ENCODE measurements at regions of chr7 and their contacts with region 1.

Region 1: GRCh38 chr7:100190048-100190711 is 12.5 kb downstream of the STAG3 start:
- DNase-seq: no peak
- ATAC-seq: peak; percentile 81
- H3K4me3 Mint-ChIP-seq: no peak overlapping the region
- H3K27ac Mint-ChIP-seq: peak overlapping the region; percentile 75
- H3K4me1 Mint-ChIP-seq: peaks cover 31% of the 10 kb centered on the region
- H3K27me3 Mint-ChIP-seq: no peaks in the 10 kb centered on the region

Region 2: GRCh38 chr7:99478464-99479440 is 711.4 kb before region 1 on chr7:
- CTCF ChIA-PET with region 1: no interaction called
- POLR2A ChIA-PET with region 1: no interaction called
- DNase-seq: no peak
- ATAC-seq: peak; percentile 28
- H3K4me3 Mint-ChIP-seq: no peak overlapping the region
- H3K27ac Mint-ChIP-seq: peak overlapping the region; percentile 76
- H3K4me1 Mint-ChIP-seq: peaks cover 42% of the 10 kb centered on the region
- H3K27me3 Mint-ChIP-seq: no peaks in the 10 kb centered on the region

Region 3: DNA sequence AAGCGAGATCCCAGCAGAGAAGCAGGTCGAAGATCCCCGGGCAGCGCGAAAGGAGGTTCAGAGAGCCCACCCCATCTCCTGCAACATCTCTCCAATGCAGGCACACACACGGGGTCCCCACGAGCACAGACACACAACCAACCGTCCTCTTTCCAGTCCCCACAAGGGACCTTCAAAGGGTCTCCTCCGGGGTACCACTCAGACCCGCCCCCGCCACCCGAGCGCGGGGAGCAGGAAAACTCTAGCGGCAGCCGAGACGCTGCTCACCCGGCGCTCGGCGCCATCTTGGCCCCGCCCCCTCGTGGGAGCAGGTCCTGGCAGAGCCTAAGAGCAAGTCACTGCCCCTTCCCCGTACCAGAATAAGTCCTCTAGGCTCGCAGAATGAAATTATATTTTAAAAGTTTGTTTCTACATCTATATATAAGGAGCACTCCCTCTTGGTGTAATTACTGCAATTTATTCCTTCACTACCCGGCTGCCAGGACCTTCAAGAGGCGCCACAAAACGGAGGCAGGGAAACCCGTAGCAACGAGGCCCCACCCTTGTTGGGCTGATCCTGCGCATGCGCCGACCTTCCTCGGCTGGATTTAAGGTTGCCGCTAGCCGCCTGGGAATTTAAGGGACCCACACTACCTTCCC is 71.0 kb before region 1 on chr7 and contains the starts of genes CNPY4 and TAF6:
- CTCF ChIA-PET with region 1: no interaction called
- POLR2A ChIA-PET with region 1: no interaction called
- DNase-seq: peak; percentile 96
- ATAC-seq: peak; percentile 77
- H3K4me3 Mint-ChIP-seq: peak within 1 kb of the TSS; percentile 93
- H3K27ac Mint-ChIP-seq: peak within 1 kb of the TSS; percentile 95
- H3K4me1 Mint-ChIP-seq: peaks cover 21% of the 10 kb centered on the region
- H3K27me3 Mint-ChIP-seq: no peaks in the 10 kb centered on the region
- total RNA-seq, gene CNPY4: 32.4 to 35.5 TPM
- total RNA-seq, gene TAF6: 74.6 to 81.0 TPM

Region 4: DNA sequence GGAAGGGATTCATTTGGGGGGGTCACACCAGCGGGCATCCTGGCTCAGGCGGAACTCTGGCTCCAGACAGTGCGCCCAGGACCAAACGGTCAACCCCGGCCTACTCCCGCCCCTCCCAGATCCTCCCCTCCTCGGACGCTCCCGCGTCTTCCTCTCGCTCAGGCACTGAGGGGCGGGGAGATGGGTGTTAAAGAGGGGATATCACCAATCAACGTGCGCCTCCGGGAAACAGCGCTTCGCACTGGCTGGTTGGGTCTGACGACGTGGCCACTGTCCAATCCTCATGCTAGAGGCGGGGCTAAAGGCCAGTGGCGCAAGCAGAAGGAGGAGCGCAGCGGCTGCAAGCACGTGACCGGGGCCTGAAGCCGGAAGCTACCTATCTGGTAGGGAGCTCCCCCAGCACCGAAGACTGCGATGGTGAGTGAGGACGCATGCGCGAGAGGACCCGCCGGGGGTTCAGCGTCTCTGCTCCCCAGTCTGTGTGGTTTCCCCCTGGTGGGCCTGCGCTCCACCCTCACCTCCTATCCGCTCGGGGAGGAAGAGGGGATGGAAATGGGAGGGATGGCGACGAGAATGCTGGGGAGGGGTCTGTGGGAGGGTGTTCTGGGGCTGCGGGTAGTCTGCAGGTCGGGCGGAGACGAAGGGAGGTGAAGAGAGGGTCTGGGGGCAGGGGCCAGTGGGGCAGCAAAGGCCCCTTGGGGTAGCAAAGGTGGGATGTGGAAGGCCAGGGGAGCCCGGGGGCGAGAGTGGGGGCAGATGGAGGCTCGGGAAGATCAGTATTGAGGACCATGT is 41.4 kb before region 1 on chr7 and contains the start of gene LAMTOR4:
- CTCF ChIA-PET with region 1: interaction called, 10 read pairs
- POLR2A ChIA-PET with region 1: no interaction called
- DNase-seq: peak; percentile 100
- ATAC-seq: peak; percentile 99
- H3K4me3 Mint-ChIP-seq: peak within 1 kb of the TSS; percentile 96
- H3K27ac Mint-ChIP-seq: peak within 1 kb of the TSS; percentile 97
- H3K4me1 Mint-ChIP-seq: peaks cover 42% of the 10 kb centered on the region
- H3K27me3 Mint-ChIP-seq: no peaks in the 10 kb centered on the region
- total RNA-seq, gene LAMTOR4: 134 to 143 TPM

Region 5: GRCh38 chr7:100200693-100201092 is 10.5 kb after region 1 on chr7:
- CTCF ChIA-PET with region 1: interaction called, 102 read pairs
- POLR2A ChIA-PET with region 1: interaction called, 3 read pairs
- DNase-seq: no peak
- ATAC-seq: no peak
- H3K4me3 Mint-ChIP-seq: no peak overlapping the region
- H3K27ac Mint-ChIP-seq: no peak overlapping the region
- H3K4me1 Mint-ChIP-seq: peaks cover 8% of the 10 kb centered on the region
- H3K27me3 Mint-ChIP-seq: no peaks in the 10 kb centered on the region

Region 6: GRCh38 chr7:100215895-100216294 is 25.7 kb after region 1 on chr7:
- CTCF ChIA-PET with region 1: interaction called, 102 read pairs
- POLR2A ChIA-PET with region 1: interaction called, 14 read pairs
- DNase-seq: no peak
- ATAC-seq: no peak
- H3K4me3 Mint-ChIP-seq: no peak overlapping the region
- H3K27ac Mint-ChIP-seq: no peak overlapping the region
- H3K4me1 Mint-ChIP-seq: peaks cover 63% of the 10 kb centered on the region
- H3K27me3 Mint-ChIP-seq: no peaks in the 10 kb centered on the region

Region 7: GRCh38 chr7:100604028-100604975 is 414.1 kb after region 1 on chr7:
- CTCF ChIA-PET with region 1: no interaction called
- POLR2A ChIA-PET with region 1: no interaction called
- DNase-seq: peak; percentile 90
- ATAC-seq: peak; percentile 79
- H3K4me3 Mint-ChIP-seq: peak overlapping the region; percentile 89
- H3K27ac Mint-ChIP-seq: peak overlapping the region; percentile 97
- H3K4me1 Mint-ChIP-seq: peaks cover 50% of the 10 kb centered on the region
- H3K27me3 Mint-ChIP-seq: peaks cover 6% of the 10 kb centered on the region